ENCODE measurements at regions of chr3 and their contacts with region 1.

Region 1: GRCh38 chr3:129087138-129087702 is 26.6 kb downstream of the GP9 start:
- DNase-seq: no peak
- H3K4me3 ChIP-seq: no peak overlapping the region
- H3K27ac ChIP-seq: no peak overlapping the region
- H3K4me1 ChIP-seq: no peaks in the 10 kb centered on the region
- H3K27me3 ChIP-seq: no peaks in the 10 kb centered on the region
- CTCF ChIP-seq: no peak

Region 2: DNA sequence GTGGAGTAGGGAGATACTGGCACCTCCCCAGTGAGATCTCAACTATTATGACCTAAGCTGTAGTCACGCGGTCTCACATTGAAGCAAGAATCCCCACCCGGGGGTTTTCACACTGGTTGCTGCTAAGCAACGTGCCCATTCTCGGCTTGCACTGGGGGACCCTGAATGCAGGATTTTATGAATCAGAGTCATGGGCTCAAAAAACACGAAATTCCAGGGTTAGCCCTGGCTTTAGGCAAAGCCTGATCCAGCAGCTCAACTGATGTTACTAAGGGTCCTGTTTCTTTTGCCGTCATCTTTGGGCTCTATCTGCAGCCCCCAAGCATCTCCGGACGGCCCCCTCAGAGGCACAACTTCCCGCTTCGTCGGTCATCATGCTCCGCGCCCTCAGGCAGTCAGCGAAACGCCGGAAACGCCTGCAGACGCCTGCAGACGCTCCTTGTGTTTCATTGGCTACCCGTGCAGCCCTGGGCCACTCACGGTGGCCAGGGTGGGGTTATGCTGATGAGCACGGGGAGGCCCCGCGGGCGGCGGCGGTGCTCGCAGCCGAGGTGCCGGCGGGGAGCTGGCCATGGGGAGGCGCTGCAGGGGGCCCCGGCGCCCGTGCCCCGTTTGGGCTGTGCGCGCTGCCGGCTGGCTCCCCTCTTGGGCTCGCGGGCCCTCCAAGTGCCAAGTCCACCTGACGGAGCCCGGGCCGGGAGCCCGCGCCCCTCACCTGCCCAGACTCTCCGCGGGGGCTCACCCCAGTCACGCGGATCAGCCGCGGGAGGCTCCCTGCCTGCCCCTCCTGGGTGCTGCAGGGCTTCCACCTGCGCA is 60.3 kb before region 1 on chr3:
- intact Hi-C with region 1: loop called (anchors 10 kb)
- DNase-seq: peak; percentile 93
- H3K4me3 ChIP-seq: peak overlapping the region; percentile 42
- H3K27ac ChIP-seq: peak overlapping the region; percentile 10
- H3K4me1 ChIP-seq: no peaks in the 10 kb centered on the region
- H3K27me3 ChIP-seq: no peaks in the 10 kb centered on the region
- CTCF ChIP-seq: peak; percentile 76

Region 3: GRCh38 chr3:129428376-129429079 is 341.3 kb after region 1 on chr3 and contains the start of gene EFCAB12:
- intact Hi-C with region 1: no loop called
- DNase-seq: peak; percentile 97
- H3K4me3 ChIP-seq: peak within 1 kb of the TSS; percentile 35
- H3K27ac ChIP-seq: peak within 1 kb of the TSS; percentile 18
- H3K4me1 ChIP-seq: no peaks in the 10 kb centered on the region
- H3K27me3 ChIP-seq: no peaks in the 10 kb centered on the region
- CTCF ChIP-seq: no peak
- total RNA-seq, gene EFCAB12: 0.16 to 0.47 TPM

Measured in colonic mucosa (tissue), 4 donors.